CD4-positive, alpha-beta memory T cell (primary cell): ENCODE measurements at regions of chr1 and their contacts with region 1.

Region 1: GRCh38 chr1:167542109-167543032 is 11.2 kb downstream of the CREG1 start:
- DNase-seq: no peak
- H3K4me3 ChIP-seq: no peak overlapping the region
- H3K4me3 Mint-ChIP-seq: peak overlapping the region in 1 of 8 donors; percentile 33
- H3K27ac ChIP-seq: no peak overlapping the region
- H3K27ac Mint-ChIP-seq: peak overlapping the region in 5 of 7 donors; percentile 1 to 64 (median 32)
- H3K4me1 ChIP-seq: peaks cover 6% of the 10 kb centered on the region
- H3K4me1 Mint-ChIP-seq: peaks cover 9 to 19% (median 16%) of the 10 kb centered on the region in 4 donors
- H3K27me3 ChIP-seq: no peaks in the 10 kb centered on the region
- H3K27me3 Mint-ChIP-seq: no peaks in the 10 kb centered on the region

Region 2: GRCh38 chr1:167263819-167264464 is 278.4 kb before region 1 on chr1:
- CTCF ChIA-PET with region 1: interaction called, 82 read pairs
- POLR2A ChIA-PET with region 1: no interaction called
- intact Hi-C with region 1: loop called (anchors 1 kb)
- DNase-seq: peak in 2 of 5 donors; percentile 4 to 8
- H3K4me3 ChIP-seq: no peak overlapping the region
- H3K4me3 Mint-ChIP-seq: no peak overlapping the region
- H3K27ac ChIP-seq: no peak overlapping the region
- H3K27ac Mint-ChIP-seq: no peak overlapping the region
- H3K4me1 ChIP-seq: peaks cover 45% of the 10 kb centered on the region
- H3K4me1 Mint-ChIP-seq: peaks cover 17 to 27% (median 19%) of the 10 kb centered on the region in 4 donors
- H3K27me3 ChIP-seq: no peaks in the 10 kb centered on the region
- H3K27me3 Mint-ChIP-seq: no peaks in the 10 kb centered on the region

Region 3: DNA sequence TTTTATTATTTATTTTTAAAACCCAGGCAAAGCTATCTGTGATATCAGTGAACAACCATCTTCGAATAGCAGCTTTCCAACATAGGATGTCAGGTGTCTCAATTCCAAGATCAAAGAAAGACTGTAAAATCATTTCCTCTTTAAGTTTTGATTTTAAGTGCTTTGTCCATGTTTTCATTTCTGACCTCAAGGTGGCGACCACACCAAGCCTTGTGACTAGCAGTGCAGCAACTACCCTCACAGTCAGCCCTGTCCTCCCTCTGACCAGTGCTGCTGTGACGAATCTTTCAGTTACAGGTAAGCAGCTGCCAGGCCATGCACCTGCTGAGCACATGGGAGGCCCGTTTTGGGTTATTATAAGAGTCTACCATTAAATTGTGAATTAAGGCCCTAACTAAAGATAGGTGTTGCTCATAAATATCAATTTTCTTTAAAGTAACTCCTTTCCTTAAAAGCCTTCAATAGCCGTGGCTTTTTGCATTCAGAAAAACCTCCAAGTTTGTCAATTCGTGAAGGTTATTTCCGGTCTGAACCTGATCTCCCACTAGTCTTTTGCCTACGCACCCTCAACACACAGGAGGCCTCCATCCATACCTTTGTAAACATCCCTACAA is 141.0 kb before region 1 on chr1:
- CTCF ChIA-PET with region 1: interaction called, 32 read pairs
- POLR2A ChIA-PET with region 1: no interaction called
- intact Hi-C with region 1: loop called (anchors 1 kb)
- DNase-seq: peak in 4 of 5 donors; percentile 37 to 47 (median 41)
- H3K4me3 ChIP-seq: no peak overlapping the region
- H3K4me3 Mint-ChIP-seq: no peak overlapping the region
- H3K27ac ChIP-seq: no peak overlapping the region
- H3K27ac Mint-ChIP-seq: no peak overlapping the region
- H3K4me1 ChIP-seq: no peaks in the 10 kb centered on the region
- H3K4me1 Mint-ChIP-seq: peaks cover 0 to 3% (median under 1%) of the 10 kb centered on the region in 4 donors
- H3K27me3 ChIP-seq: no peaks in the 10 kb centered on the region
- H3K27me3 Mint-ChIP-seq: no peaks in the 10 kb centered on the region

Region 4: DNA sequence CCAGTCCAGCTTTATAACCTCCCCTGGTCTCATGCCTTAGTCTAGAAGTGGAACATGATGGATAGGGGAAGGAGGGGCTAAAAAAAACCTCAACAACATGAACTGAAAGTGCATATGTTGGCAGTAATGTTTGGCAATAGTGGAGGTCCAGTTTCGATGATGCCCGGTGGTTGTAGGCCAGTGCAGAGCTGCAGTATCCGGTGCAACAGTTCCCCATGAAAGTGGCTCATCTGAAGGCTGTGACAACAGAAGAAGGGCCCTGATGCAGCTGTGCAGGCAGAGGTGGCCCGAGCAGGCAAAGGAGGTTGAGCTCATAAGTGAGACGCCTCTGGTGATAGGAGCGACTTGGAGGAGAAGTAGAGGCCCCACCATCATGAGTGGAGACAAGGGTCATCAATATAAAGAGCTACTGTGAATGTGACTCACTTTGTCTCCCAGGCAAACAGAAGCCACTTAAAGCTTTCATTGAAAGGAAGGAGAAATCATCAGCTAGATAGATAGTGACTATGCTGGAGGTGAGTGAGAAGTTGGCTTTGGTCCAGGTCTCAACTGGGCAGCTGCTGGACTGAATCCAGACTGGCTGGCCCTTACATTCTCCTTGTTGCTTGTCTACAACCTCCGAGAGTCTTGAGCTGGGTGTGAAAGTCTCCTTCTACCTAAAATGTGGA is 21.3 kb after region 1 on chr1:
- CTCF ChIA-PET with region 1: interaction called, 34 read pairs
- POLR2A ChIA-PET with region 1: no interaction called
- intact Hi-C with region 1: no loop called
- DNase-seq: no peak
- H3K4me3 ChIP-seq: no peak overlapping the region
- H3K4me3 Mint-ChIP-seq: no peak overlapping the region
- H3K27ac ChIP-seq: no peak overlapping the region
- H3K27ac Mint-ChIP-seq: peak overlapping the region in 1 of 7 donors; percentile 42
- H3K4me1 ChIP-seq: no peaks in the 10 kb centered on the region
- H3K4me1 Mint-ChIP-seq: peaks cover 0 to 1% (median 0%) of the 10 kb centered on the region in 4 donors
- H3K27me3 ChIP-seq: no peaks in the 10 kb centered on the region
- H3K27me3 Mint-ChIP-seq: peaks cover 0 to 1% of the 10 kb centered on the region in 2 donors